BJ (cell line): ENCODE measurements at regions of chr16 and their contacts with region 1.

Region 1: GRCh38 chr16:69057400-69058378 is 47.8 kb upstream of the HAS3 start:
- DNase-seq: peak; percentile 43
- H3K4me3 ChIP-seq: no peak overlapping the region
- H3K27me3 ChIP-seq: no peaks in the 10 kb centered on the region
- CTCF ChIP-seq: no peak

Region 2: DNA sequence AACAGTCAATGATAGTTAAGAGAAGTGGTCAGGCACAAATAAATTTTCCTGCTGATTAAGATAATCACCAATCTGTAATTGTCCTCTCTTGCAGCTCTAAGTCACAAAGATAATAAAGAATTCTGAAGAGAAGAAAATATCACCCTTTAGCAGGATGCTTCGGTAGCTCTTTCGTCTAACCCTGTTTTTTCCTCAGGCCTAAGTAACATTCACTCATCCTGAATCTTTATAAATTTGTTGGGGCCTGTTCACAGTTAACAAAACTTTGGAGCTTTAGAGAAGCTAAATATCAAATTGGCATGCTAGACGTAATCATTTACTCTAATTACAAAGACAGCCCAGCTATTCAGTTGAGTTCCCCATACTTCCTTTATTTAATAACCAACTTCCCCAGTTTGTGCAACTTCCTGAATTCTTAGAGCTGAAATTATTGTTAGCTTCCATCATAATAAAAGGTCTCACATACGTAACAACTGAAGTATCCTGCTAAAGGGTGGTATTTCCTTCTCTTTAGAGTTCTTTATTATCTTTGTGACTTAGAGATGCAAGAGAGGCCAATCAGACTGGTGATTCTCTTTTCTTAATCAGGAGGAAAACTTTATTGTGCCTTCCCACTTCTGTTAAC is 95.8 kb before region 1 on chr16:
- CTCF ChIA-PET with region 1: no interaction called
- POLR2A ChIA-PET with region 1: no interaction called
- DNase-seq: no peak
- H3K4me3 ChIP-seq: no peak overlapping the region
- H3K27me3 ChIP-seq: no peaks in the 10 kb centered on the region
- CTCF ChIP-seq: no peak

Region 3: DNA sequence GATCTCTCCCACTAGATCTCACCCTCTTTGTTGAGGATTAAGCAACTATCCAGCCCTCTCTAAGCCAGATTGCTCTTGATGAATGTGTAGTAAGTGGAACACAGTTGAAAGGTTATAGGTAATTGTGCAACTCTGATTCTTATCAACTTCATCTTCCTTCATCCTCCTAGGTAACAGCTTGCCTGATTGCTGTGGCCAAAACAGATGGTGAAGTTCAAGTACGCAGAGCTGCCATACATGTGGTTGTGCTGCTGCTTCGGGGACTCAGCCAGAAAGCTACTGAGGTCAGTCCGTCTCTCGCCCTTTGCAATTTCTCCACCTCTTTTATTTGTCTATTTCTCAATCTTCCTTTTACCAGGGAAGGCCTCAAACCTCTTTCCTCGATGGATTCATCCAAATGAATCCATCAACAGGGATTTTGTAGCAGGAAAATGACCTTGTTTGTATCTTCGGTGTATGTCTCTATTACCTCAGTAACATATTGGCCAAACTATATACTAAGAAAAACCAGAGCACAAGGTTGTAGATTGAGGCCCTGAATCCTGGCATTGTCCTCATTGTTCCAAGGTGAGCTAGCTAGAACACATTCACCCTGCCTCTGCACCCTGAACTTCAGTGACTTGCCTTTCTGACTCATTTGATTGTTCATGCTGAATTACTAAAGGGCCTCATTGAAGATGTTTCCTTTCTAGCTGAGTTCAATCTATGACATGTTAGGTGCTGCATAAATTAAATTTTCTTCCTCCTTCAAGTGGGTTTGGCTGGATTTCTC is 17.4 kb before region 1 on chr16:
- CTCF ChIA-PET with region 1: no interaction called
- POLR2A ChIA-PET with region 1: interaction called, 11 read pairs
- DNase-seq: no peak
- H3K4me3 ChIP-seq: no peak overlapping the region
- H3K27me3 ChIP-seq: no peaks in the 10 kb centered on the region
- CTCF ChIP-seq: no peak

Region 4: GRCh38 chr16:69073161-69073669 is 15.5 kb after region 1 on chr16:
- CTCF ChIA-PET with region 1: no interaction called
- POLR2A ChIA-PET with region 1: interaction called, 13 read pairs
- DNase-seq: peak; percentile 38
- H3K4me3 ChIP-seq: no peak overlapping the region
- H3K27me3 ChIP-seq: no peaks in the 10 kb centered on the region
- CTCF ChIP-seq: no peak